MCF 10A (cell line): ENCODE measurements at regions of chr14 and their contacts with region 1.

Region 1: DNA sequence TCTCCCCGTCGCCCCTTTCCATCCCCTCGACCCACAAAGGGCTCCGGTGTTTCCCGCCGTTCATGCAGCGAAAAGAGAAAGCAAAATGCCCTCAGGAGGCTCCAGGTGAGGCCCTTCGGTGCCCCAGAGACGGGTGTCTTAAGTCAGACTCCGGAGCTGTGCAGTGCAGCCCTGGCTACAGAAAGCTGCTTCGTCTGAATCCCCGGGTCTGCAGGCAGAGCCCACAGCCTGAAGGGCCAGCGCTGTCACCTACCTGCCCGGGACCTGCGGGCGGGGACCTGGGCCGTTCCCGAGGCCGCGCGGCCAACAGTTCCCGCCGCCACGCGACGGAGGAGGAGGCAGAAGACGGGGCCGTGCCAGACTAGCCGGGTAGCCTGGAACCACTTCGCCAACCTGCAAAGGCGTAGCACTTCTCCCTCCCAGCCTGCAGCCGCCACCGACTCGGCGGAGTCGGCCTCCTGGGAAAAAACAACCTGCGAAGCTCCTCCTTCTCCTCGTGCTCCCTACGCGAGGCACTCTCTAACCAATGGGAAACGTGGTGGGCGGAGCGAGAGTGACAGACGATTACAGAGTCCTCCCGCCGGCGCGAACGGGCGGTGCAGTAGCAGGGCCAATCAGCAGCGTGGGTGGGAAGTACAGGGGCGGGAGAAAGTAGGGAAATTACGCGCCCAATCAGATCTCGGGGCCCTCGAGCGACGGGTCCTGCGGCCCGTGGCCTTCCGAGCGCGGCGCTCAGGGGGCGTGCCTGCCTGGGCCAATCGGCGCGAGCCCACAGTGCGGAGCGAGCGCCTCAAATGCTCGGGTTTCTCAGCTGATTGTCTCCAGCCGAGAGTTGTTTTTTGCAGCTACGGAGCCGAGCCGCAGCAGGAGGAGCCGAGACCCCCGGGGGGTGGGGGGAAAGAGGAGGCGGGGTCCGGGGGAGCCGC is at the starts of genes GPR137C and TXNDC16:
- DNase-seq: peak; percentile 100
- H3K4me3 Mint-ChIP-seq: peak within 1 kb of the TSS; percentile 80
- H3K27ac Mint-ChIP-seq: peak within 1 kb of the TSS; percentile 53
- H3K4me1 Mint-ChIP-seq: peaks cover 12% of the 10 kb centered on the region
- H3K27me3 Mint-ChIP-seq: no peaks in the 10 kb centered on the region
- CTCF ChIP-seq: no peak
- total RNA-seq, gene GPR137C: 0.10 TPM in 1 of 2 replicates, not detected in the other
- total RNA-seq, gene TXNDC16: 2.2 and 3.8 TPM in 2 replicates

Region 2: GRCh38 chr14:52464175-52464574 is 88.2 kb before region 1 on chr14:
- CTCF ChIA-PET with region 1: no interaction called
- POLR2A ChIA-PET with region 1: no interaction called
- intact Hi-C with region 1: no loop called
- DNase-seq: no peak
- H3K4me3 Mint-ChIP-seq: no peak overlapping the region
- H3K27ac Mint-ChIP-seq: no peak overlapping the region
- H3K4me1 Mint-ChIP-seq: peaks cover 7% of the 10 kb centered on the region
- H3K27me3 Mint-ChIP-seq: no peaks in the 10 kb centered on the region
- CTCF ChIP-seq: no peak

Region 3: DNA sequence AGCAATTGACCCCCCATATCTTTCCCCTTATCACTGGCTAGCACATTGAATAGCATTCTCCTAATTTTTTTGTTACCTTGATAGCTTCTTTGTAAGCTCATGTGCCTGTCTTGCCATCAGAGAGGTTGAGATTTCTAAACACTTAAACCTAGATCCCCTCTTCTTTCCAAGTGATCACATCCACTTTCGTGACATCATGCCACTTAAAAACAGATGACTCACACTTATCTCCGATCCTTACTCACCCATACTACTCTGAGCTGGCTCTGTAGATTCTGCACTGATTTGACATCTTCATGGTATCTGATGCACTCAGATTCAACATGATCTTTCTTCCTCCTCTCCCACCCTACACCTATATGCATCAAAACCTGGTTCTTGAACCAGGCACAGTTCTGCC is 10.8 kb after region 1 on chr14:
- CTCF ChIA-PET with region 1: interaction called, 4 read pairs
- POLR2A ChIA-PET with region 1: interaction called, 19 read pairs
- intact Hi-C with region 1: no loop called
- DNase-seq: peak; percentile 38
- H3K4me3 Mint-ChIP-seq: no peak overlapping the region
- H3K27ac Mint-ChIP-seq: no peak overlapping the region
- H3K4me1 Mint-ChIP-seq: peaks cover 9% of the 10 kb centered on the region
- H3K27me3 Mint-ChIP-seq: no peaks in the 10 kb centered on the region
- CTCF ChIP-seq: no peak

Region 4: DNA sequence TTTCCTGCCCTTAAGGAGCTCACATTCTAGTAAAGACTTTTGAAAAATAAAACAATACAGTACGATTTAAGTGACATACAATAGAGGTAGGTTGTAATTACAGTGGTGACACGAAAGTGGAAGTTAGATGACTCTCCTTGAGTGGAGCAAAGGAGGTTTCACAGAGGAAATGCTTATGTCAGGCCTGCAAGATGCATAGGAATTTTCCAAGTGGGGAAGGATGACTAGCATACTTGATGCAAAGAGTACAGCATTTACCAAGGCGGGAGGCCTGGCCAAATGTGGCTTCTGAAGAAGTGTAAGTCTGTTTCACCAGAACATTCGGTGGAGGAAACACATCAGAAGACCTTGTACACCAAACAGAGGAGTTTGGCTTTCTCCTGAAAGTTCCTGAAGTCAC is 87.8 kb after region 1 on chr14:
- CTCF ChIA-PET with region 1: no interaction called
- POLR2A ChIA-PET with region 1: interaction called, 4 read pairs
- intact Hi-C with region 1: loop called (anchors 5 kb)
- DNase-seq: no peak
- H3K4me3 Mint-ChIP-seq: no peak overlapping the region
- H3K27ac Mint-ChIP-seq: no peak overlapping the region
- H3K4me1 Mint-ChIP-seq: no peaks in the 10 kb centered on the region
- H3K27me3 Mint-ChIP-seq: no peaks in the 10 kb centered on the region
- CTCF ChIP-seq: no peak

Region 5: GRCh38 chr14:52695481-52696091 is 143.3 kb after region 1 on chr14 and contains the start of gene ERO1A:
- CTCF ChIA-PET with region 1: interaction called, 3 read pairs
- POLR2A ChIA-PET with region 1: interaction called, 59 read pairs
- intact Hi-C with region 1: loop called (anchors 5 kb)
- DNase-seq: peak; percentile 84
- H3K4me3 Mint-ChIP-seq: peak within 1 kb of the TSS; percentile 97
- H3K27ac Mint-ChIP-seq: peak within 1 kb of the TSS; percentile 92
- H3K4me1 Mint-ChIP-seq: peaks cover 28% of the 10 kb centered on the region
- H3K27me3 Mint-ChIP-seq: no peaks in the 10 kb centered on the region
- CTCF ChIP-seq: no peak
- total RNA-seq, gene ERO1A: 52.0 and 55.5 TPM in 2 replicates

Region 6: GRCh38 chr14:52700701-52701172 is 148.4 kb after region 1 on chr14:
- CTCF ChIA-PET with region 1: no interaction called
- POLR2A ChIA-PET with region 1: interaction called, 59 read pairs
- intact Hi-C with region 1: no loop called
- DNase-seq: peak; percentile 55
- H3K4me3 Mint-ChIP-seq: no peak overlapping the region
- H3K27ac Mint-ChIP-seq: peak overlapping the region; percentile 38
- H3K4me1 Mint-ChIP-seq: peaks cover 21% of the 10 kb centered on the region
- H3K27me3 Mint-ChIP-seq: no peaks in the 10 kb centered on the region
- CTCF ChIP-seq: no peak

Region 7: DNA sequence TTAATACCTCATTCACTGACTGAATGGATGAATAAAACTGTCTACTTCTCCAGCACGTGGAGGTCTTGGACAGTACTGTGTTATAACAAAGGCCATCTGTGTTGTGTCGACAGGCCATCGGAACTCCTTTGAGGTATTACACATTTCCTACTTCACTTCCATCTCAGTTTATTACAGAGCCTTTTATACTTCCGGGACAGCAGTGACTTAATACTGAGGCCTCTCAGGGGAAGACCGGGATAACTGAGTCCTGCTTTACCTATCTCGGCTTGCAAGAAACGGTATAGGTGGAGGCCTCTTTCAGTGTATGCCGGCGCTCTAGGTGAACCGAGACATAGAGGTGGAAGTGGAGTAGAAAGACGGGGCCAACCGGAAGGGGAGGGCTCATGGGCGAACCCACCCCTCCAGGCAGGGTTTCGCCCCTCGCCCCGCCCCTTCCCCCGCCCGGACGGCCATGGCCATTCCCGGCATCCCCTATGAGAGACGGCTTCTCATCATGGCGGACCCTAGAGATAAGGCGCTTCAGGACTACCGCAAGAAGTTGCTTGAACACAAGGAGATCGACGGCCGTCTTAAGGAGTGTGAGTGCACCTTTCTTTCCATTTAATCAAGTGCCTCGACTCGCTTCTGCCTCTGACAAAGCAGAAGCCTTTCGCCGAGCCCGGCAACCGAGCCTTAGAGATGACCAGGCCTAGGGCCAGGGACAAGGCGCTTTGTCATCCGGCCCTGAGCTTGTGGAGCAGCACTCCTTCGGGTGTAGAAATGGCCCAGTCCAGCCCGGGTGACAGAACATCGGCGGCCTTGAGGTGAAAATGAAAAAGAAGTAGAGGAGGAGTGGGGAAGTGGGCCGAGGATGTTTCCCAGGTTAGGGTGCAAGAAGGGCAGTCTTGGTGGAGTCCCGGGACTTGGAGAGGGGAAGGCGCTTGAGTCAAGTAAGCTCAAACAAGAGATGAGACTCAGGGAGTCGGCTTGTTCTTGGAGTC is 154.7 kb after region 1 on chr14 and contains the start of gene PSMC6:
- CTCF ChIA-PET with region 1: no interaction called
- POLR2A ChIA-PET with region 1: interaction called, 16 read pairs
- intact Hi-C with region 1: no loop called
- DNase-seq: peak; percentile 95
- H3K4me3 Mint-ChIP-seq: peak within 1 kb of the TSS; percentile 98
- H3K27ac Mint-ChIP-seq: peak within 1 kb of the TSS; percentile 99
- H3K4me1 Mint-ChIP-seq: peaks cover 22% of the 10 kb centered on the region
- H3K27me3 Mint-ChIP-seq: no peaks in the 10 kb centered on the region
- CTCF ChIP-seq: no peak
- total RNA-seq, gene PSMC6: 83.9 and 90.0 TPM in 2 replicates

Region 8: DNA sequence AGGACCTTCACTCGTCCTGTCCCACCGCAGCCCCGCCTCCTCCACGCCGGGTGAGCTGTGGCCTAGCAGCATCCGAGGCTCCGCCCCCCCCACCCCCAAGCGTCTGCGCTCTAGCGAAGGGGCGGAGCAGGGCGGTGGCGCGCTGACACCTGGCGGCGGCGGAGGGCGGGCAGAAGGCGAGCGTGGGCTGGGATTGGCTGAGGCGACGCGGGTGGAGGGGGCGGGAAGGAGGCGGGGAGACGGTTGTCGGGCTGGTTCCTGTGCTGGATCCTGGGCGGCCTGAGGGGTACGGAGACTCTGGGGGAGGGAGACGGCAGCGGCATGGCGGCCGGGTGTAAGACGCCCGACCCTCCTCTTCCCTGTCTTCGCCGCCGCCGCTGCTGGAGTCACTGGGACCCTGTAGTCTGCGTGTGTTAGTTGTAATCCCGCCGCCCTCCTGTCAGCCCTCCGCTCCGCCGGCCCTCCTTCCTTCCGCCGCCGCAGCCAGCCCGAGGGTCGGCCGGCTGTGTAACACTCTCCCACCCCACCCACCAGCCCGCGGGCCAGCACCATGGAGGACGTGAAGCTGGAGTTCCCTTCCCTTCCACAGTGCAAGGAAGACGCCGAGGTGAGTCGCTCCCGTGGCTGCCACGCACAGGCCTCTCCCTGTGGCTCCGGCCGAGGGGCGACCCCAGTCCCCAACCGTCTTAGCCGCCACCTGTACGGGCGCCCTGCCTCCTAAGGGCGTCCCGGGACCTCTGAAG is 177.8 kb after region 1 on chr14 and contains the start of gene STYX:
- CTCF ChIA-PET with region 1: no interaction called
- POLR2A ChIA-PET with region 1: interaction called, 10 read pairs
- intact Hi-C with region 1: no loop called
- DNase-seq: peak; percentile 98
- H3K4me3 Mint-ChIP-seq: peak within 1 kb of the TSS; percentile 96
- H3K27ac Mint-ChIP-seq: peak within 1 kb of the TSS; percentile 93
- H3K4me1 Mint-ChIP-seq: no peaks in the 10 kb centered on the region
- H3K27me3 Mint-ChIP-seq: no peaks in the 10 kb centered on the region
- CTCF ChIP-seq: no peak
- total RNA-seq, gene STYX: 15.5 and 16.3 TPM in 2 replicates